Mucosa of descending colon (tissue), 3 donors: ENCODE measurements at regions of chr11 and their contacts with region 1.

Region 1: DNA sequence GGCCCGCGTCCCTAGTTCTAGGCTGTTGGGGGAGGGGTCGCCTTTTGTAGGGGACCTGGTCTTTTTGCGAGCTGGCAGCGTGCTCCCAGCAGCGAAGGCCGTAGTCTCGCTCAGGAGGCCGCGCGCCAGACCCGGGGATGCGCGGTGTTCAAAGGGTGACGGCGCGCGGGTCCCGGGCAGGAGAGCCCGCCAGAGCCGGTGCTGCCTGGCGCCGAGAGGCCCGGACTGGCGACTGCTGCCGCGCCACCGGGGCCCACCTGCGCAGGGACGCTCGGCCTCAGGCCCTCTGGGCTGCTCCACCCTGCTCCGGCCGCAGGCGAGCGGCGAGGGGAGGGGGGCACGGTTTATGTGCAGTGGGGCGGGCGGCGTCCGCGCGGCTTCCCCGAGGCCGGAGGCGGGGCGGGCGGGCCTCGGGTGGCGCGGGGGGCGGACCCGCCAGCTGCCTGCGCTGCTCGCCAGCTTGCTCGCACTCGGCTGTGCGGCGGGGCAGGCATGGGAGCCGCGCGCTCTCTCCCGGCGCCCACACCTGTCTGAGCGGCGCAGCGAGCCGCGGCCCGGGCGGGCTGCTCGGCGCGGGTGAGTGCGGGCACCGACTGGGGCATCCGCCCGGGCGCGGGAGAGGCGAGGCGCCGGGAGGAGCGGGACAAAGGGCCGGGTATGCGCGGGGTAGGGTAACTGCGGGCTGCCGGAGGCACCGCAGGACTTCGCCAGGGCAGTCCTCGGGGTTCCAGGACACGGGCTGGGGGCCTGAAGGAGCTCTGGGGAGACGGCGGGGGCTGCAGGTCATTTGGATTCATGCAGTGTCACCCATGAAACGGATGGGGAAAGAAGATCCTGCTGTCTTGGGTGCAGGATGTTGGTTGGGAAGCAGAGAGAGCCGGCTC is at the start of gene PRSS23:
- DNase-seq: peak; percentile 77 to 88 (median 80)
- ATAC-seq: peak; percentile 91
- H3K4me3 ChIP-seq: peak within 1 kb of the TSS; percentile 21
- H3K4me1 ChIP-seq: no peaks in the 10 kb centered on the region
- CTCF ChIP-seq: no peak
- total RNA-seq, gene PRSS23: 75.0 to 128 (median 122) TPM

Region 2: GRCh38 chr11:85844426-85845129 is 955.7 kb before region 1 on chr11:
- intact Hi-C with region 1: no loop called
- DNase-seq: no peak
- ATAC-seq: peak; percentile 96
- H3K4me3 ChIP-seq: no peak overlapping the region
- H3K4me1 ChIP-seq: no peaks in the 10 kb centered on the region
- CTCF ChIP-seq: no peak

Region 3: GRCh38 chr11:86440305-86440716 is 360.0 kb before region 1 on chr11:
- intact Hi-C with region 1: no loop called
- DNase-seq: no peak
- ATAC-seq: peak; percentile 27
- H3K4me3 ChIP-seq: no peak overlapping the region
- H3K4me1 ChIP-seq: no peaks in the 10 kb centered on the region
- CTCF ChIP-seq: no peak

Region 4: DNA sequence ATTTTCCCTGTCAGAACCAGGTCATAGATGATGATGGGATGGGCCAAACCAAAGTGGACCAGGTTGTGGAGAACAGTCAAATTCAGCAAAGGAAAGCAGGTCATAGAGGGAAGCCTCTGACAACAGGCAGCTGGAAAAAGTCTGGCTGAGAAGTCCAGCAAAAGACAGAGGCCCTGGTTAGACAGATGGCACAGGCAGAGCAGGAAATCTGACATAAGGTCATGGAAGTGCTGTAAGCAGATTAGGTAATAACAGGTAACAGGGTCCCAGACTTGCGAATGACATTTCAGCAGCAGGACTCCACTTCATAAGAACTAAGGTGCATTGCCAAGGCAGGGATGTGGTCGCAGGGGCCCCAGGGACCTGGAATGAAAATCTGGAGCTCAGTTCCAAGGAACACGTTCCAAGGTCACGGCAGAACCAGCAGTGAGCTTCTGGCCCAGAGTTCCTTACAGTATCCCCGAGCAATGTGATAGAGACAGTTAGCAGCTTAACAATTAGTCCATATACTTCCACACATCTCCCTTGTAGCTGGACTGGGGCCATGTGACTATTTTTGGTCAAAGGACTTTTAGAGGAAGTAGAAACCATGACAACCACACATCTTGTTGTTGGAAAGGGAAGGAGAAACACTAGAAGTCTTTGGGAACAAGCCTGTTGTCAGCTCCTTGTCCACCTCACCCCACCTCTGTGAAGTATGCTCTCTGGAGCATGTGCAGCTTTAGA is 203.3 kb before region 1 on chr11:
- intact Hi-C with region 1: no loop called
- DNase-seq: peak in 1 of 3 donors; percentile 36
- ATAC-seq: no peak
- H3K4me3 ChIP-seq: no peak overlapping the region
- H3K4me1 ChIP-seq: peaks cover 6% of the 10 kb centered on the region
- CTCF ChIP-seq: no peak

Region 5: DNA sequence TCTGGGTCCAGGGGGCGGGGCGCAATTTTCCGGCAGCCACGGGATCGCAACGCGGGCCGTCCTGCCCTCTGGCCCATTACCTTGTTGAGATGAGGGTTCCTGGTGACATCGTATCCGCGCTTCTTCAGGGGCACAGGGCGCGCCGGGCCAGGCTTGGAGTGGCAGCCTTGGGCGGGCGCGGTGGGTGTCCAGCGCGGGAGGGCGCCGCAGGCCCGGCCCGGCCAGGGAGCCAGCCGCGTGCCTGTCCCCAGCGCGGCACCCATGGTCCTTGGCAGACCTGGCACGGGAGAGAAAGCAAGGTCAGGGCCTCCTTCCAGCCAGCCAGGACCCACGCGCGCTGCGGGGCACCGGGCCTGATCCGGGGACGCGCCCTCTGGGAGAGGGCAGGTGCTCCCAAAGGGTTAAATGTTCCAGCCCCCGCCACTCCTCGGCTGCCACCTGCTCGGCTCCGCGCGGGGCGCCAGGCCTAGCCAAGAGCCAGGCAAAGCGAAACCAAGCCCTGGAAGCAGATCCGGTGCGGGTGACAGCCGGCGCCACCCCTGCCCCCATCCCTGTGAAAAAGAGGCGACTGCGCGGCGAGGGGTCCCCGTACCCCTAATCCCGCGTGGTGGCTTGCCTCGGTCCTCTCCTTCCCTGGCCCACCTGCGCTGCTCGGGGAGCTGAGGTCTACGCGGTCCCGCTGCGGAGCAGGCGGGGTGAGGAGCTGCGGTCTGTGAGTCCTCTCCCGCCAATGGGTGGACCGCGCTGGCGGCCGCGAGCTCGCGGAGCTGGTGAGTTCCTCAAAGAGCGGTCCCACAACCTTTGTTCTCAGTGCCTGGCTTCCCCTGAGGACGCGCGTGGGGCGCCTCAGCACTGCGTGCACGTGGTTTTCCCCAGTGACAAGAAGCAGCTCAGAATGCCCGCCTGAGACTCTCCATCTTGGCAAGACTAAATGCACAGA is 128.4 kb before region 1 on chr11 and contains the start of gene ME3:
- intact Hi-C with region 1: loop called in 1 of 2 experiments (anchors 2 kb)
- DNase-seq: peak; percentile 83 to 87 (median 85)
- ATAC-seq: peak; percentile 76
- H3K4me3 ChIP-seq: peak within 1 kb of the TSS; percentile 51
- H3K4me1 ChIP-seq: peaks cover 39% of the 10 kb centered on the region
- CTCF ChIP-seq: no peak
- total RNA-seq, gene ME3: 29.3 to 51.2 (median 31.8) TPM

Region 6: DNA sequence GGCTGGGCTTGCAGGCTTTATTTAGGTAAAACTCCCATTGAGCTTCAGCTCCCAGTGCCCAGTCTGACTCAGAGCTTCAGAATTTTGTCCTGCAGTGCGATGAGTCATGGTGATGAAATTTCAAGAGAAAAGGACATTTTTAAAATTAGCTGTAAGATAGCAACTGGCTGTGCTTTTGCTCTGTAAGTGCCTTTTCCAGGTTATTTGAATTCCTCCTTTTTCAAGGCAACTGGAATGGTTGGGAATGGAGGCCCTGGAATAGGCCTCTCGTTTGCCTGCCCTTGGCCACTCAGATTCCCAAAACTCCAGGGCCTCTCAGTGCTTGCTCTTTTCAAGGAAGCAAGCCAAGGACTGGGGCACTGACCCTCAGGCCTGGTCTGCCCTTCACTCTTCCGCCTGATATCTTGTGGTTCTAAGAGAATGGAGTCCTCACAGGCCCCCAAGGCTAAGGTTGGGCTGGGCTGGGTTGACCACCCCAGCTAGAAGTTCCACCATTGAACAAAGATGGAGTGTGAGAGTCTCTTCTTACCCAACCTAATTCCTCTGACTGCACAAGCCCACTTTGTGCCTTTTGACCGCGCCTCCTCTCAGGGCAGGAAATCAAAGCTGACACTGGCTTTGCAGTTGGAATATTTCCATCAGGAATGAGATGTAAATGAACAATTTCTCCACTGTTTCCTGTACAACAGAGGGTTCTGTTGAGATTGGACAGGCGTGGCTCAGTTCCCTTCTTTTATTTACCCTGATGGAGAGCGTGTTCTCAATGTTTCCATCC is 59.4 kb before region 1 on chr11:
- intact Hi-C with region 1: no loop called
- DNase-seq: peak in 1 of 3 donors; percentile 15
- ATAC-seq: peak; percentile 56
- H3K4me3 ChIP-seq: no peak overlapping the region
- H3K4me1 ChIP-seq: peaks cover 3% of the 10 kb centered on the region
- CTCF ChIP-seq: no peak